ENCODE measurements at regions of chr2 and their contacts with region 1.

Region 1: DNA sequence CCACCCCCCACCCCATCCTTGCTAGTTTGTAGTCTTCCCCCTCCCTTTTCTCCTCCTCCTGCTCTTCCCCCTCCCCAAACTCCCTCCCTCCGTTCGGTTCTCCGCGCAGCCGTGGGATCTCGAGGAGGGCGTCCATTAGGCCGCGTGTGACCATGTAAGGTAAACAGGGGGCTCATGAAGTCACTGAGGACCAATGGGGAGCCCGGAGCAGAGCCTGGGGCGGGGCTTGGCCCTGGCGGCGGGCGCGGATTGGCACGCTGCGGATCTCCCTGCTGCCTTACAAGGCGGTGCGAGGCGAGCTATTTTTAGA is 246 bp upstream of the KLF7 start:
- DNase-seq: peak; percentile 99
- H3K4me3 Mint-ChIP-seq: peak overlapping the region; percentile 95
- H3K27ac Mint-ChIP-seq: peak overlapping the region; percentile 99
- H3K4me1 Mint-ChIP-seq: peaks cover 49% of the 10 kb centered on the region
- H3K27me3 Mint-ChIP-seq: peaks cover 2% of the 10 kb centered on the region

Region 2: DNA sequence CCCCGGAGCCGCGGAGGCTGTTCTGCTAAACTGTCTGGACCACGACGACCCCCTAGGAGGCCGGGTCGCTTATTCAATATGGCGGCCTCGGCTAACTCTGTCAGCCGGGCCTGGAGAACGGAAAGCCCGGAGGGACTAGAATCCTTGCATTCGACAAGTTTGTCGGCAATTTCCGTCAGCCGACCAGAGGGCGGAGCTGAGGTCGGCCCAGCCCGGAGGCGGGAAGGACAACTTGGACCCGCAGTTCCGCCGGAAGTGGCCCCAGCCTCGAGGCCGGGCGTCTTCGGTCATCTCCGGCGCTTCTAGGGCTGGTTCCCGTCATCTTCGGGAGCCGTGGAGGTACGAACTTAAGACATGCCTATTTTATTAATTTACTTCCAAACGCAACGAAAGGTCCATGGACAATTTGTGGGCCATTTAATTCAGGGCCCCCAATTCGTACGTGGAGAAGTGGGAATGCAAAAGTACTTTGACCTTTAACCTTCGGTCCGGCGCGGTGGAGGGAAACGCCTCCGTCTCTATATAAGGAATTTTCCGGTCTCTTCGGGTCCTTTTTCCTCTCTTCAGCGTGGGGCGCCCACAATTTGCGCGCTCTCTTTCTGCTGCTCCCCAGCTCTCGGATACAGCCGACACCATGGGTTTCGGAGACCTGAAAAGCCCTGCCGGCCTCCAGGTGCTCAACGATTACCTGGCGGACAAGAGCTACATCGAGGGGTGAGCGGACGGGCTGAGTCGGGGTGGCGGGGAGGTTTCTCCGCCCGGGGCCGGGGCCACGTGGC is 1006.5 kb before region 1 on chr2 and contains the starts of genes EEF1B2 and NDUFS1:
- CTCF ChIA-PET with region 1: no interaction called
- POLR2A ChIA-PET with region 1: no interaction called
- intact Hi-C with region 1: loop called (anchors 5 kb)
- DNase-seq: peak; percentile 98
- H3K4me3 Mint-ChIP-seq: peak within 1 kb of the TSS; percentile 96
- H3K27ac Mint-ChIP-seq: peak within 1 kb of the TSS; percentile 97
- H3K4me1 Mint-ChIP-seq: peaks cover 52% of the 10 kb centered on the region
- H3K27me3 Mint-ChIP-seq: no peaks in the 10 kb centered on the region
- total RNA-seq, gene EEF1B2: 1,180 to 1,194 TPM
- total RNA-seq, gene NDUFS1: 79.2 to 80.8 TPM

Region 3: GRCh38 chr2:207073801-207074678 is 92.0 kb before region 1 on chr2:
- CTCF ChIA-PET with region 1: interaction called, 3 read pairs
- POLR2A ChIA-PET with region 1: interaction called, 21 read pairs
- intact Hi-C with region 1: loop called (anchors 1 kb)
- DNase-seq: peak; percentile 69
- H3K4me3 Mint-ChIP-seq: peak overlapping the region; percentile 41
- H3K27ac Mint-ChIP-seq: peak overlapping the region; percentile 85
- H3K4me1 Mint-ChIP-seq: peaks cover 27% of the 10 kb centered on the region
- H3K27me3 Mint-ChIP-seq: peaks cover 2% of the 10 kb centered on the region

Region 4: GRCh38 chr2:207223051-207223450 is 57.1 kb after region 1 on chr2:
- CTCF ChIA-PET with region 1: interaction called, 6 read pairs
- POLR2A ChIA-PET with region 1: interaction called, 18 read pairs
- intact Hi-C with region 1: loop called (anchors 1 kb)
- DNase-seq: peak; percentile 56
- H3K4me3 Mint-ChIP-seq: no peak overlapping the region
- H3K27ac Mint-ChIP-seq: peak overlapping the region; percentile 24
- H3K4me1 Mint-ChIP-seq: peaks cover 46% of the 10 kb centered on the region
- H3K27me3 Mint-ChIP-seq: peaks cover 3% of the 10 kb centered on the region

Region 5: DNA sequence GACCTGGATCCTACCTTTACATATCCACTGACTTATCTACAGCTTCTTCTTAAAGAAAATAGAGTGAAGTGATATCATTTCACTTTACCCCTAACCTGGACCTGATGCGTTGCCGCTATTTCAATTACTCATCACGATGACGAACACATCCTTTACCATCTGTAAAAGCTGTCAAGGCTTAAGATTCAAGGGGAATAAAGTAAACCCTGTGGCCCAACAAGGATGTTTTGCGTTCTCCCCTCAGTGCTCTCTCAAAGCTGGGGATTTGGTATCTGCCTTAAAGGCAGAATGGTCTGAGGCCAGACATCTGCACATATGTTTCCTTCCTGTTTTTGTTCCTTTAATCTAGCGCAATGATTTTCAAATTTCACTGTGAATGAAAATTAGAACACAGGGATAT is 99.9 kb after region 1 on chr2:
- CTCF ChIA-PET with region 1: no interaction called
- POLR2A ChIA-PET with region 1: no interaction called
- intact Hi-C with region 1: no loop called
- DNase-seq: no peak
- H3K4me3 Mint-ChIP-seq: no peak overlapping the region
- H3K27ac Mint-ChIP-seq: no peak overlapping the region
- H3K4me1 Mint-ChIP-seq: peaks cover 2% of the 10 kb centered on the region
- H3K27me3 Mint-ChIP-seq: no peaks in the 10 kb centered on the region

Region 6: DNA sequence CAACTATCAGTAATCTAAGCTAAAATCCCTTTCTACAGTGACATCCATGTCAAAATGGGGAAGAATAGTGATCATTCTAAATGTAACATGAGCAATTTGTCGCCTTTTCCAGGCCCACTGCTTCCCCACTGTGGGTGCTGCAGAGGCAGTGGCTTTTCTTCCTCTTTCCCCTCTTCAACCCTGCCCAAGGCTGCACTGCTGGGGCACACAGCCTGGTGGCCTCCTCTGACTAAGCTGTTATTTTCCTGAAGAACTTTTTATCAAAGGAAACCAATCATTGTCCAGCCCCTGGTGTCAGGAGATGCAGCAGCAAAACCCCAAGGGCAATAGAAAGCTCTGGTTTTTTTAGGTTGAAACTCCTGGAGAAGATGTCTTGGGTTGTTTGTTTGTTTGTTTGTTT is 117.4 kb after region 1 on chr2:
- CTCF ChIA-PET with region 1: interaction called, 5 read pairs
- POLR2A ChIA-PET with region 1: interaction called, 4 read pairs
- intact Hi-C with region 1: loop called (anchors 1 kb)
- DNase-seq: peak; percentile 34
- H3K4me3 Mint-ChIP-seq: no peak overlapping the region
- H3K27ac Mint-ChIP-seq: peak overlapping the region; percentile 65
- H3K4me1 Mint-ChIP-seq: peaks cover 67% of the 10 kb centered on the region
- H3K27me3 Mint-ChIP-seq: no peaks in the 10 kb centered on the region

Region 7: GRCh38 chr2:207334624-207335371 is 168.8 kb after region 1 on chr2:
- CTCF ChIA-PET with region 1: interaction called, 4 read pairs
- POLR2A ChIA-PET with region 1: interaction called, 12 read pairs
- intact Hi-C with region 1: loop called (anchors 1 kb)
- DNase-seq: peak; percentile 77
- H3K4me3 Mint-ChIP-seq: peak overlapping the region; percentile 59
- H3K27ac Mint-ChIP-seq: peak overlapping the region; percentile 98
- H3K4me1 Mint-ChIP-seq: peaks cover 82% of the 10 kb centered on the region
- H3K27me3 Mint-ChIP-seq: no peaks in the 10 kb centered on the region

Region 8: GRCh38 chr2:207491956-207492860 is 326.2 kb after region 1 on chr2:
- CTCF ChIA-PET with region 1: no interaction called
- POLR2A ChIA-PET with region 1: no interaction called
- intact Hi-C with region 1: no loop called
- DNase-seq: no peak
- H3K4me3 Mint-ChIP-seq: no peak overlapping the region
- H3K27ac Mint-ChIP-seq: no peak overlapping the region
- H3K4me1 Mint-ChIP-seq: no peaks in the 10 kb centered on the region
- H3K27me3 Mint-ChIP-seq: no peaks in the 10 kb centered on the region

Region 9: DNA sequence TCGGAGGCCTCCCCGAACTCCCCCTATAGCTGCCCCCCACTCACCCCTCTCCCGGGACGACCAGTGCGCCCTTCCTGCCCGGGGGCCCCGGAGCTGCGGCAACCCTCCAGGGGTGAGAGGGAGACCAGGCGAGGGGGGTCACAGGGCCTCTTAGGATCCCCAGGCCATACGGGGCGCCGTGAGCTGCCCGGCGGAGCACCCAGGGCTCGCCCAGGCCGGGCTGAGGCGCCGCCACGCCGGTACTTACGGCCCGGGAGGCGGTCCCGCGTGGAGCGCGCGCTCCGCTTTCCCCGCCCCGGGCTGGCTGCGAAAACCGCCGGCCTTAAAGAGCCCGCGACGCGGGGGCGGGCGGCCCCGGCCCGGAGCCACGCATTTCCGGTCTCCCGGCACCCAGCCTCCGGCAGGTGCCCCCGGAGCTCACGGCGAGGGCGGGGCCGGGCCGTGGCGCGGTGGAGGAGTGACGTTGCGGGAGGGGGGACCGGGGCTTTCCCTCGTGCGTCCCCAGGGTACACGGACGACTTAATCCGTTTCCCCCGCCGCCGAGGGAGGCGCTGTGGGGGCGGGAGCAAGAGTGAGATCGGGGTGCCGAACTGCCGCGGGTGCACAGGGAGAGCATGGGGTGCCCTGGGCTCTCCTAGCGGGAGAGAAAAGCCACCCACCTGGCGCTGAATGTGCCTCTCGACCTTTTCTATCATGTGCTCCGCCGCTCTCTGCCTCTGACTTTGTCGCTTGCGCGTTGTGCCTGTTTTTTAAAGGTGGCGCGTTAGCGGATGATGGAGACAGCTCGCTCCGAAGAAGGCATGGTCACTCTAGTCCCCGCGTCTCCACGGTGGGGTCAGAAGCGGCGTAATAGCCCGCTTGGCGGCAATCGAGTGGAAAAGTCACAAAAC is 459.3 kb after region 1 on chr2 and contains the start of gene METTL21A:
- CTCF ChIA-PET with region 1: no interaction called
- POLR2A ChIA-PET with region 1: interaction called, 4 read pairs
- intact Hi-C with region 1: loop called (anchors 5 kb)
- DNase-seq: peak; percentile 96
- H3K4me3 Mint-ChIP-seq: peak within 1 kb of the TSS; percentile 87
- H3K27ac Mint-ChIP-seq: peak within 1 kb of the TSS; percentile 96
- H3K4me1 Mint-ChIP-seq: peaks cover 48% of the 10 kb centered on the region
- H3K27me3 Mint-ChIP-seq: no peaks in the 10 kb centered on the region
- total RNA-seq, gene METTL21A: 21.2 to 22.9 TPM

Measured in activated CD4-positive, alpha-beta memory T cell treated with anti-CD3 and anti-CD28 coated beads for 36 hours (primary cell).